ENCODE measurements at regions of chr11 and their contacts with region 1.

Region 1: GRCh38 chr11:66694732-66695207 is 17.1 kb upstream of the RBM4B start:
- DNase-seq: peak; percentile 98 to 99
- H3K4me3 ChIP-seq: no peak overlapping the region
- H3K4me3 Mint-ChIP-seq: no peak overlapping the region
- H3K27ac Mint-ChIP-seq: no peak overlapping the region
- H3K4me1 ChIP-seq: peaks cover 3% of the 10 kb centered on the region; the same call in 1 of the 2 replicates
- H3K4me1 Mint-ChIP-seq: no peaks in the 10 kb centered on the region
- H3K27me3 ChIP-seq: no peaks in the 10 kb centered on the region
- H3K27me3 Mint-ChIP-seq: no peaks in the 10 kb centered on the region
- CTCF ChIP-seq: peak; percentile 99

Region 2: DNA sequence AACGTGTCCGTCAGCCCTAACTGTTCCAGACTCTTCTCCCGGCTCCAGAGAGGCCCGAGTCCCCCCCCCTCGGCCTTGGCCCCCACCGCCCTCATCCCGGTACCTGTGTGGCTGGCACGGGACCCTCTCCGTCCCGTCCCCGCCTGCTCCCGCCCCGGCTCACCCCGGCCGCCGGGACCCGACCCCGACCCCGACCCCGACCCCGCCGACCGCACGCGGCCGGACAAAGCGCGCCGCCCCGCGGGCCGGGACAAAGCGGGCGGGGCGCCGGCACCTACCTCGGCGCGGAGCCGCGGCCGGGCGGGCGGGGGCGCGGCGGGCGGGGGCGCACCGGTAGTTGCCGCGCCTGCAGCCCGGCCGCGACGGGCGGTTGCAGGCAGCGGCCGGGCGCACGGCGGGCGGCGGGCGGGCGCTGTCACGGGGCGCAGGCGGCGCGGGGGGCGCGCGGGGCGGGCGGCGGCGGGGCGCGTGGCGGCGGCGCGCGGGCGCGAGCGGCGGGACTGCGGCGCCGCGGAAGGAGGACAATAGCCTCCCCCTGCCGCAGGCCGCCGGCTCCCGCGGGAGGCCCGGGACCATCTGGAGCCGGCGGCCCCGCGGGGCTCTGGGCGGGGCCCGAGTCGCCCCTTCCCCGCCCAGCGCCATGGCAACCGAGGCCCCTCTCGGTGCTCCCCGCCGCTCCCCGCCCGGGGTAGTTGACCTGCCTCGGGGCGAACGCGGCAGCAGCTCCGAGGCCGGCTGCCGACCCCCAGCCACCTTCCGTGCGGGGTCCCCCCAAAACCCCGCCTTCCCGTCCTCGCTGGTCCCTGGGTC is 33.3 kb after region 1 on chr11:
- CTCF ChIA-PET with region 1: no interaction called
- POLR2A ChIA-PET with region 1: no interaction called
- intact Hi-C with region 1: loop called (anchors 2 kb)
- DNase-seq: peak; percentile 48 to 58
- H3K4me3 ChIP-seq: peak overlapping the region; percentile 66
- H3K4me3 Mint-ChIP-seq: peak overlapping the region; percentile 82
- H3K27ac Mint-ChIP-seq: peak overlapping the region; percentile 60
- H3K4me1 ChIP-seq: peaks cover 20% of the 10 kb centered on the region
- H3K4me1 Mint-ChIP-seq: peaks cover 25% of the 10 kb centered on the region
- H3K27me3 ChIP-seq: no peaks in the 10 kb centered on the region
- H3K27me3 Mint-ChIP-seq: peaks cover 4% of the 10 kb centered on the region
- CTCF ChIP-seq: no peak

Region 3: GRCh38 chr11:66744485-66745340 is 49.9 kb after region 1 on chr11:
- CTCF ChIA-PET with region 1: no interaction called
- POLR2A ChIA-PET with region 1: interaction called, 3 read pairs
- intact Hi-C with region 1: loop called (anchors 2 kb)
- DNase-seq: peak; percentile 94 to 98
- H3K4me3 ChIP-seq: peak overlapping the region; percentile 84
- H3K4me3 Mint-ChIP-seq: peak overlapping the region; percentile 83
- H3K27ac Mint-ChIP-seq: peak overlapping the region; percentile 69
- H3K4me1 ChIP-seq: peaks cover 14% of the 10 kb centered on the region; the same call in 1 of the 2 replicates
- H3K4me1 Mint-ChIP-seq: peaks cover 7% of the 10 kb centered on the region
- H3K27me3 ChIP-seq: no peaks in the 10 kb centered on the region
- H3K27me3 Mint-ChIP-seq: no peaks in the 10 kb centered on the region
- CTCF ChIP-seq: no peak

Region 4: DNA sequence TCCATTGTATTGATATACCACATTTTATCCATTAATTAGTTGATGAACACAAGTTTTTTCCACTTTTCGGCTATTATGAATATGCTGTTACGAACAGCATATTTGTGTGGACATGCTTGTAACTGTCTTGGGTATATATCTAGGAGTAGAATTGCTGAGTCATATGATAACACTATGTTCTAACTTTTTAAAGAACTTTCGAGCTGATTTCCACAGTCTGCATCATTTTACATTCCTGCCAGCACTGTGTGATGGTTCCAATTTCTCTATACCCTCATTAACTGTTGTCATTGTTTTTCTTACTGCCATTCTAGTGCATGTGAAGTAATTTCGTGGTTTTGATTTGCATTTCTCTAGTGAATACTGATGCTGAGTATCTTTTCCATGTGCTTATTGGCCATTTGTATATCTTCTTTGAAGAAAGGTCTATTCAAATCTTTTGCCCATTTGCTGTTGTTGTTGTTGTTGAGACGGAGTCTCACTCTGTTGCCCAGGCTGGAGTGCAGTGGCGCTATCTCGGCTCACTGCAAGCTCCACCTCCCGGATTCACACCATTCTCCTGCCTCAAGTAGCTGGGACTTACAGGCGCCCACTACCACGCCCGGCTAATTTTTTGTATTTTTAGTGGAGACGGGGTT is 141.1 kb after region 1 on chr11:
- CTCF ChIA-PET with region 1: interaction called, 11 read pairs
- POLR2A ChIA-PET with region 1: no interaction called
- intact Hi-C with region 1: loop called (anchors 1 kb)
- DNase-seq: no peak
- H3K4me3 ChIP-seq: no peak overlapping the region
- H3K4me3 Mint-ChIP-seq: no peak overlapping the region
- H3K27ac Mint-ChIP-seq: no peak overlapping the region
- H3K4me1 ChIP-seq: no peaks in the 10 kb centered on the region; the same call in 1 of the 2 replicates
- H3K4me1 Mint-ChIP-seq: peaks cover 13% of the 10 kb centered on the region
- H3K27me3 ChIP-seq: no peaks in the 10 kb centered on the region
- H3K27me3 Mint-ChIP-seq: no peaks in the 10 kb centered on the region
- CTCF ChIP-seq: no peak

Region 5: DNA sequence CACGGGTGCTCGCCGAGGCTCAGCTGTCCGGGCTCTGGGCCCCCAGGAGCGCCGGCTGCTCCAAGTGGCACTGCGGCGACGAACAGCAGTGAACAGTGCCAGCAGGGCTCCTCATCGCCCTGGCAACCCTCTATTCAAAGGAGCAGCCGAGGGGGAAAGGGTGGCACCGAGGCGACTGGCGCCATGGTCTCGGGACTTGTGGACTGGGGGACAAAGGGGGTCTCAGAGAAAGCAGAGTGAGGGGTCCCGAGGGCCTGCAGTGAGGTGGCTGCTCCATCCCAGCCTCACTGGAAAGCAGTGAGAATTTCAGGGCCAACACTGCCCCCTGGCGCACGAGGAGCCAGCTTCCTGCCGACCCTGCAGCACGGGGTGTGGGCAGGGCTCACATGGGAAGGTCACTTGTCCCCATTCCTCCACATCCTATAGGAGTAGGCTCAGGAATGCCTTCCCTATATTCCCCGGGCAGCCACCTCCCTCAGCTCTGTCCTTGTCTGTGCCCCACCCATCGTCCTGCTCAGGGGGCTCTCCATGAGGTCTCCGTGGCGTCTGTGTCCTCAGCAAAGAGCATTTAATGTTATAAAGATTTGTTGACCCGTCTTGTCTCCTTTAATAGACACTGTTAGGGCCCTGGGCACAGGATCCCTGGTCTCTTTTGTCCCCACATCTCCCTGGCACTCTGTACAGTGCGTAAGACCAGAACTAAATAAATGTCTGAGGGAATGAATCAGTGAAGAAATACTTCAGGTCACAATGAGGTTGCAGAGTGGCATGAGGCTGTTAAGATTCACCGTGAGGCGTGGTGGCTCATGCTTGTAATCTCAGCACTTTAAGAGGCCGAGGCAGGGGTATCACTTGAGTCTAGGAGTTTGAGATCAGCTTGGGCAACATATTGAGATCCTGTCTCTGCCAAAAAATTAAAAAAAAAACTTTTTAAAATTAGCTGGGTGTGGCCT is 188.5 kb after region 1 on chr11:
- CTCF ChIA-PET with region 1: no interaction called
- POLR2A ChIA-PET with region 1: no interaction called
- intact Hi-C with region 1: loop called (anchors 1 kb)
- DNase-seq: peak; percentile 75 to 83
- H3K4me3 ChIP-seq: no peak overlapping the region
- H3K4me3 Mint-ChIP-seq: no peak overlapping the region
- H3K27ac Mint-ChIP-seq: no peak overlapping the region
- H3K4me1 ChIP-seq: no peaks in the 10 kb centered on the region; the same call in 1 of the 2 replicates
- H3K4me1 Mint-ChIP-seq: peaks cover 6% of the 10 kb centered on the region
- H3K27me3 ChIP-seq: no peaks in the 10 kb centered on the region
- H3K27me3 Mint-ChIP-seq: no peaks in the 10 kb centered on the region
- CTCF ChIP-seq: peak; percentile 73 to 81

Region 6: GRCh38 chr11:66976048-66976467 is 281.3 kb after region 1 on chr11:
- CTCF ChIA-PET with region 1: no interaction called
- POLR2A ChIA-PET with region 1: no interaction called
- intact Hi-C with region 1: loop called (anchors 1 kb)
- DNase-seq: peak; percentile 70 to 84
- H3K4me3 ChIP-seq: no peak overlapping the region
- H3K4me3 Mint-ChIP-seq: no peak overlapping the region
- H3K27ac Mint-ChIP-seq: no peak overlapping the region
- H3K4me1 ChIP-seq: peaks cover 8% of the 10 kb centered on the region
- H3K4me1 Mint-ChIP-seq: no peaks in the 10 kb centered on the region
- H3K27me3 ChIP-seq: no peaks in the 10 kb centered on the region
- H3K27me3 Mint-ChIP-seq: no peaks in the 10 kb centered on the region
- CTCF ChIP-seq: peak; percentile 93 to 95